BJ (cell line): ENCODE measurements at regions of chr2 and their contacts with region 1.

Region 1: DNA sequence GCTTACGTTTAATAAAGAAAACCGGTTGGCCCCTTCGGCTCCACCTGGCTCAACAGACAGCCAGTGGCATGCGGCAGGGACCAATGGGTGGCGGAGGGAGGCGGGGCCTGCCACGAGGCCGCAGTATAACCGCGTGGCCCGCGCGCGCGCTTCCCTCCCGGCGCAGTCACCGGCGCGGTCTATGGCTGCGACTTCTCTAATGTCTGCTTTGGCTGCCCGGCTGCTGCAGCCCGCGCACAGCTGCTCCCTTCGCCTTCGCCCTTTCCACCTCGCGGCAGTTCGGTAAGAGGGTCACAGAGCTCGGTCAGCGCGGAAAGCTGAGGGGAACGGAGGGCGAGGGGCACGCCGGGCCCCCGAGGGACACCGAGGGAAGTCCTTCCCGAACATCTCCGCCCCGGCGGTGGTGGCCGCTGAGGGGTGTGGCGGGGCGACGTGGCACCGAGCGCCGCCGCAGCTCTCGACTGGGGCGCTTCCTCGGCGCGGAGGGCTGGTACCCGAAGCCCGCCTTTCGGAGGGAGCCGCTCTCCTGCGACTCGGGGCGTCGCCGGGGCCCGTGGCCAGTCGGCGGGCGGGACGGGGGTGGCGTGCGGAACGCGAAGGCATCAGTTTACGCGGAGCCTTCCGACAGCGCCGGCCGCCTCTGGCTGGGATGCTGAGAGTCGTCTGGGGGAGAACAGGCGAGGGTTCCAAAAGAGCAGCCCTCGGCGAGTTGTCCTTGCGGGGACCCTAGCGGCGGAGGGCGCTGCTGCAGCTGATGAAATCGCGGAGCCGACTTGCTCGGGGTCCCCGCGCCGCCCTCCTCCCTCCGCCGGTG is at the start of gene MTHFD2:
- DNase-seq: peak; percentile 84
- H3K4me3 ChIP-seq: peak within 1 kb of the TSS; percentile 100
- H3K27me3 ChIP-seq: no peaks in the 10 kb centered on the region
- CTCF ChIP-seq: peak; percentile 91
- polyA plus RNA-seq, gene MTHFD2: 282 and 380 TPM in 2 replicates

Region 2: DNA sequence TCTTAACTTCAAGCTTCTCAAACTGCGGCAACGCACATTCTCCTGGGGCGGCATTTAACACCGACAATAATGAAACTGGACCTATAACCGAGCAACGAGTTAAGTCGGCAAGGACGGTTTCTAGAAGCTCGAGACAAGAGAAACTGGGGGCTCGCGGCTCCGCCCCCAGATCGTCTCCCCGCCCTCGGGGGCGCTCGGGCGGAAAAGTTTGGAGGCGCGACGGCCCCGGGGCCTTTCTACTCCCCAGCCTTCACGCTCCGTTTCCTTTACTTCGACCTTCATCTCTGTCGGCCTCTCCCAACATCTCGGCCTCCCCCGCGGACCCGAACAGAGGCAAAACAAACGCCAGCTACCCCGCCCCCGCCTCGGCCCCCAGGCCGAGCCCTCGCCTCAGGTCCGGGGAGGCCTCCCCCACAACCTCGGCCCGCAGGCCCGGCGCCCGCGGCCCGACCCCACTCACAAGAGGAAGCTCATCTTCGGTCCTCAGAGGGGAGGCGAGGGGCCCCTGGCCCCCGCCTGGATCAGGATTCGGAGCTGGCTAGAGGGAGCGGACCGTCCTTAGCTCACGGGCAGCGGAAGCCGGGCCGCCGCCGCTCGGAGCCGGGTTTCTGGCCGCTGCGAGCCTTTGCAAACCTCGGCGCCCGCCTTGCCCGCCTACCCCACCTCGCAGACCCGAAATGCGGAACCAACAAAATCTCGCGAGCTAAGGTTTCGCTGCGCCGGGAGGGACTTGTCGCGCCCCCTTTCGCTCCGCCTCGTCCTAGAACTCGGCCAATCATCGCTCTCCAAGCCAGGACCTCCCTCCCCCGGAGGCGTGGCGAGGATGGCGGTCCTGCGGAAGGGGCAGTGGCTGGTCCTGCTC is 20.2 kb before region 1 on chr2 and contains the start of gene MOB1A:
- CTCF ChIA-PET with region 1: interaction called, 10 read pairs
- POLR2A ChIA-PET with region 1: no interaction called
- DNase-seq: peak; percentile 93
- H3K4me3 ChIP-seq: peak within 1 kb of the TSS; percentile 70
- H3K27me3 ChIP-seq: no peaks in the 10 kb centered on the region
- CTCF ChIP-seq: no peak
- polyA plus RNA-seq, gene MOB1A: 19.1 and 42.8 TPM in 2 replicates

Region 3: DNA sequence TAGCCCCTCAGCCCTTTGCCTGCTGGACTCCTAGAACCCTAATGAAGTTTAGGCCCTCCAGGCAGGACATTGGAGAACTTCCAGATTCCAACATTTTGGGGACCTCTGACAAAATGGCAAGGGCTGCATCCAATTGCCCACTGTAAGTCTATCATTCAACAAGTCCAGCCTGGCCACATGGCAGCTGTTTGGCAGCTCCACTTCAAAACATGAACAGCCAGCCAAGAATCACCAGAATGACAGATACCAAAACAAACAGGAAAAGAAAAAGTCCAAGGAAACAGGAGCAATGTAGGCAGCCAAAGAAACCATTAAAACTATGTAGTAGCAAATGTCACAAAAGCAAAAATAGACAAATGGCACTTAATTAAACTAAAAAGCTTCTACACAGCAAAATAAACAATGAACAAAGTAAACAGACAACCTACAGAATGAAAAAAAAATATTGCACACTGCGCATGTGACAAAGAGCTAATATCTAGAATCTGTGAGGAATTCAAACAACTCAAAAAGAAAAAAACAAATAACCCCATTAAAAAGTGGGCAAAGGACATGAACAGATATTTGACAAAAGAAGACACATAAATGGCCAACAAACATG is 119.1 kb after region 1 on chr2:
- CTCF ChIA-PET with region 1: no interaction called
- POLR2A ChIA-PET with region 1: no interaction called
- DNase-seq: no peak
- H3K4me3 ChIP-seq: no peak overlapping the region
- H3K27me3 ChIP-seq: no peaks in the 10 kb centered on the region; the same call in 1 of the 2 replicates
- CTCF ChIP-seq: no peak